Left ventricle myocardium inferior (tissue), 1 donor: ENCODE measurements at regions of chr20 and their contacts with region 1.

Region 1: GRCh38 chr20:41095110-41095969 is 42.0 kb upstream of the PLCG1 start:
- DNase-seq: peak; percentile 43
- H3K4me3 ChIP-seq: no peak overlapping the region
- H3K27ac ChIP-seq: no peak overlapping the region
- H3K4me1 ChIP-seq: peaks cover 7% of the 10 kb centered on the region
- H3K27me3 ChIP-seq: no peaks in the 10 kb centered on the region
- CTCF ChIP-seq: peak; percentile 88

Region 2: DNA sequence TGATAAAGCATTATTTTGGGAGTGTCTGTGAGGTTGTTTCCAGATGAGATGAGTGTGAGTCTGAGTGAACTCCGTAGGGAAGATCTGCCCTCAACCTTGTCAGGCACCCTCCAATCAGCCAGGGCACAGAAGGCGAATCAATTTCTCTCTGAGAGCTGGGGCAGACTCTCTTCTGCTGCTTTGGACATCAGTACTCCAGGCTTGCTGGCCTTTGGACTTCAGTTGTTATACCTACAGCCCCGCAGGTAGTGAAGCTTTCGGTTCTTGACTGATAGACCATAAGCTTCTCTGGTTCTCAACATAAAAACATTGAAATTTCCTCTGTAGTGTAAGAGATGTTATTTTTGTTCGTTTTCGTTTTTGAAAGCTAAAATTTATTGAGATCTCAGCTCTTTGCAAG is 477.7 kb before region 1 on chr20:
- intact Hi-C with region 1: no loop called
- DNase-seq: no peak
- H3K4me3 ChIP-seq: no peak overlapping the region
- H3K27ac ChIP-seq: no peak overlapping the region
- H3K4me1 ChIP-seq: no peaks in the 10 kb centered on the region
- H3K27me3 ChIP-seq: peaks cover 29% of the 10 kb centered on the region
- CTCF ChIP-seq: no peak

Region 3: DNA sequence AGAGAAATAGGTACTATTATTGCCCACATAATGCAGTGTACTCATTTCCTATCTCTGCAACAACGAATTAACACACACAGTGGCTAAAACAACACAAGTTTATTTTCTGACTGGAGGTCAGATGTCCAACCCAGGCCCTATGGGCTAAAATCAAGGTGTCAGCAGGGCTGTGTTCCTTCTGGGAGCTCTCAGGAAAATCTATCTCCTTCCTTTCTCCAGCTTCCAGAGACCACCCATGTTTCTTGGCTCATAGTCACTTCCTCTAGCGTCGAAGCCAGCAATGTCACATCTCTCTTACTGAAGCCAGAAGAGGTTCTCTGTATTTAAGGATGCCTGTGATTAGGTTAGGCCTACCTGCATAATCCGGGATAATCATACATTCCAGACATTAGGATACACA is 127.6 kb before region 1 on chr20:
- intact Hi-C with region 1: loop called (anchors 2 kb)
- DNase-seq: no peak
- H3K4me3 ChIP-seq: no peak overlapping the region
- H3K27ac ChIP-seq: no peak overlapping the region
- H3K4me1 ChIP-seq: peaks cover 13% of the 10 kb centered on the region
- H3K27me3 ChIP-seq: no peaks in the 10 kb centered on the region
- CTCF ChIP-seq: no peak

Region 4: DNA sequence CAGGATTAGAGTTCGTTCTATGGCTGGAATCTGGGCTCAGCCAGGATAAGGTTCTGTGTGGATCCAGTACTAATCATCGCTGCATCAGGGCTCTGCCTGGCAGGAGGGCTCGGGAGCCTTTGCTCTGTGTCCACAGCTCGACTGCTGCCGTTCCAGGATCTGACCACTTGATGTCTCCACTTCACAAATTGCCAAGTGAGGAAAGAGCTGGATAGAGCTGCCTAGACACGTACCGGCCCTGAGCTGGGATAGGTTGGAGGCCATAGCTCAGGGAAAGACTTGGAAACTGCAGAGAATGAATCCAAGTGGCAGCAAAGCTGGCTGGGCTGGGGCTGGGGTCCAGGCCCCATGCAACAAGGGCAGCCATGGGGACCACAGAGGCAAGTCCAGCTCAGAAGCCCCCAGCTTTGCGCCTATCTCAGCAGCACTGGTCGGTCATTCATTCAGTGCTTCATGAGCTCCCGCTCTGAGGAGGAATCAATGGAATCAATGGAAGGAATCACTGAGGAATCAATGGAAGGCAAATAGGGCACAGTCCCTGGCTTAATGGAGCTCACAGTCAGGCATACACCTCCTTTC is 104.7 kb before region 1 on chr20:
- intact Hi-C with region 1: loop called (anchors 5 kb)
- DNase-seq: peak; percentile 73
- H3K4me3 ChIP-seq: no peak overlapping the region
- H3K27ac ChIP-seq: no peak overlapping the region
- H3K4me1 ChIP-seq: peaks cover 10% of the 10 kb centered on the region
- H3K27me3 ChIP-seq: no peaks in the 10 kb centered on the region
- CTCF ChIP-seq: peak; percentile 88